Activated CD4-positive, alpha-beta T cell treated with anti-CD3 and anti-CD28 coated beads for 36 hours (primary cell): ENCODE measurements at regions of chr11 and their contacts with region 1.

Region 1: DNA sequence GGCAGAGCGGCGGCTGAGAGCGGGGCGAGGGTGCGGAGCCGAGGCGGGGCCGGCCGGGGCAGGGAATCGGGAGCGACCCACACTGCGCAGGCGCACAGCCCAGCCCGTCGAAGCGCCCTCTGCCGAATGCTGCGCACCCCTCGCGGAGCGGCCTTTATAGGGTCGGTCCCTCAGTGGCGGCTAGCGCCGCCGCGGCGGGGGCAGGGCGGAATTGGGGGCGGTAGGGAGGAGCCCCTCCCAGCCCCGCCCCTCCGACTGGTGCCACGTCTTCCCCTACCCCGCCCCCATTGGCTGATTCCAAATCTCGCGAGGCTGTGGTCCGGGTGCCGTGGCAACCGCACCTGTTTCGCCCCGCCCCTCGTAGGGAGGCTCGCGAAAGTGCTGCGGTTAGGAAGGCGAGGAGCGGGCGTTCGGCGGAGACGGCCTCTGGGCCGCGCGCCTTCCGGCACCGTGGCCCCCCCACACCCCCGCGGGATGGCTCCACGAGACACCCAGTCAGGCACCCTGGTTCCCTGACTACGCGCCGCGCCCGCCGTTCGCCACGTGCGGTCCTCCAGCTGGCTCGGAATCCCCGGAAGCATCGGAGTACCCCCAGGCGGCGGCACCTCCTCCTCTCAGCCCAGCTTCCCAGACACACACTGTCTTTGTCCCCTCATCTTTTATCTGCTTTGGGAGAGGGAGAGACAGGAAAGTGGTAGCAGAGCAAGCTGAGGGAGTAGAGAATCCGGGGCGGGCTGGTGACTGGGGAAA is at the start of gene EHD1:
- DNase-seq: peak; percentile 100
- ATAC-seq: peak; percentile 85
- H3K4me3 Mint-ChIP-seq: peak within 1 kb of the TSS; percentile 92
- H3K27ac Mint-ChIP-seq: peak within 1 kb of the TSS; percentile 97
- H3K4me1 Mint-ChIP-seq: peaks cover 60% of the 10 kb centered on the region
- H3K27me3 Mint-ChIP-seq: no peaks in the 10 kb centered on the region
- total RNA-seq, gene EHD1: 71.0 to 73.6 TPM

Region 2: DNA sequence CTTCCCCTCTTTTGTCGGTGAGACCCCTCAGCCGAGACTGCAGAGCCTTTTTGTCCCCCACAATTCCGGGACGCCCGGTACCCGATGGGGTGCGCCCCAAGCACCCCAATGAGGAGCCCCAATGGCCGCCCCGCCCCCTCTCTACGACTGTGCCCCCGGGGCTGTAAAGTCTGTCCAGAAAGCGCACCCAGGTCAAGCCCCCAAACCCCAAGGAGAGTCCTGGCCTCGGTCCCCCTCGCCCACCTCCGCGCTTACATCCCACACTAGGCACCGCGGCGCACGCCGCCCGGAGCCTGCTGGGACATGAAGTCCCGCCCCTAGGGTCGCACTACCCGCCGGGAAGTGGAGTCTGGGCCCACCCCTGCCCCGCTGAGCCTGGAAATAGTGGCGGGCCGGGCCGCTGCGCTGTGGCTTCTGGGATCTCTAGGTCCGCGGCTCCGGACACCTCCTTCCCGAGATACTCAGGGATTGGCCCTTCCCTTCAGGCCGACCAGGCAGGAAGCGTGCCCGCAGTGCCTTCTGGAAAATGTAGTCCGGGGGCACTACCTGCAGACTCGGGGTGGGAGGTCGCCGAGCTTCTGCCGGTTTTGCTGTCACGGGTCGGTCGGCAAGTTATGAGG is 68.3 kb before region 1 on chr11 and contains the start of gene MEN1:
- CTCF ChIA-PET with region 1: no interaction called
- POLR2A ChIA-PET with region 1: no interaction called
- intact Hi-C with region 1: loop called in 1 of 2 experiments (anchors 1 kb)
- DNase-seq: peak; percentile 92
- ATAC-seq: peak; percentile 95
- H3K4me3 Mint-ChIP-seq: peak within 1 kb of the TSS; percentile 93
- H3K27ac Mint-ChIP-seq: peak within 1 kb of the TSS; percentile 85
- H3K4me1 Mint-ChIP-seq: peaks cover 21% of the 10 kb centered on the region
- H3K27me3 Mint-ChIP-seq: no peaks in the 10 kb centered on the region
- total RNA-seq, gene MEN1: 34.8 to 38.5 TPM

Region 3: GRCh38 chr11:64864473-64865285 is 14.0 kb before region 1 on chr11:
- CTCF ChIA-PET with region 1: interaction called, 139 read pairs
- POLR2A ChIA-PET with region 1: interaction called, 128 read pairs
- intact Hi-C with region 1: loop called (anchors 1 kb)
- DNase-seq: peak; percentile 81
- ATAC-seq: peak; percentile 46
- H3K4me3 Mint-ChIP-seq: peak overlapping the region; percentile 64
- H3K27ac Mint-ChIP-seq: peak overlapping the region; percentile 95
- H3K4me1 Mint-ChIP-seq: peaks cover 95% of the 10 kb centered on the region
- H3K27me3 Mint-ChIP-seq: no peaks in the 10 kb centered on the region

Region 4: GRCh38 chr11:64906314-64906635 is 27.6 kb after region 1 on chr11:
- CTCF ChIA-PET with region 1: no interaction called
- POLR2A ChIA-PET with region 1: no interaction called
- intact Hi-C with region 1: no loop called
- DNase-seq: no peak
- ATAC-seq: no peak
- H3K4me3 Mint-ChIP-seq: no peak overlapping the region
- H3K27ac Mint-ChIP-seq: no peak overlapping the region
- H3K4me1 Mint-ChIP-seq: peaks cover 6% of the 10 kb centered on the region
- H3K27me3 Mint-ChIP-seq: no peaks in the 10 kb centered on the region

Region 5: DNA sequence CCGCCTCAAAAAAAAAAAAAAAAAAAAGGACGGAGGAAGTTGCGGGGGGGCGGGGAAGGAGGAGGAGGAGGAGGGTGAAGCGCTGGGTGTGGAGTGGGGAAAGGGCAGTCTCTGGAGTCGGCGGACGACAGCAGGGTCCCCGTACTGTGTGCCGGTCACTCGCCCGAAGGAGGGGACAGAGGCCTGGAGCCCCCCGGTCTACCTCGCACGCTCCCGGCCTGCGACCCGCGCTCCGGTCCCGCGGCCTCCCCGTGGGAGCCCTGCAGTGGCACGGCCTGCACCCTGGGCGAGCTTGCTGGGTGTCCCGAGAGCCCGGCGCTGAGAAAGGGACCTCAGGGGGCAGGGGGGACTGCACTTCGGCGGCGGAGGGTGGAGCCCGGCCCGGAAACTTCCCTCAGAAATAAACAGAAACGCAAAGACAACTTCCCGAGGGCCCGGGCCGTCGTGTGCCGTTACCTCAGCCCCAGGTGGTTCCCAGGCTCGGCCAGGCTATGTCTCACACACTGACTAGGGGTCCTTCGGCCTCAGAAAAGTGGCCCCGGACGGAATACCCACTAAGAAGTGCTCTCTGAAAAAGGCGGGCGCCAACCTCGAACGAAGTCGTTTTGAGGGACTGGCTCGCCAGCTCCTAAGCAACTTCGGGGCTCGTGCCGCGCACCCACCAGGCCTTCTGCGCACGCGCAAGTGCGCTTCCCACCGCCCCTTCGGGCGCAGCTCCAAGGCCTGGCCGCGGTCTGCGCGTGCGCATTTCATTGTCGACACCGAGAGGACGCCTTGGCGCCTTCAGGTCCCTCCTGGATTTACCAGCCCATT is 93.0 kb after region 1 on chr11 and contains the start of gene MAJIN:
- CTCF ChIA-PET with region 1: no interaction called
- POLR2A ChIA-PET with region 1: no interaction called
- intact Hi-C with region 1: loop called in 1 of 2 experiments (anchors 1 kb)
- DNase-seq: peak; percentile 96
- ATAC-seq: peak; percentile 48
- H3K4me3 Mint-ChIP-seq: peak within 1 kb of the TSS; percentile 63
- H3K27ac Mint-ChIP-seq: peak within 1 kb of the TSS; percentile 94
- H3K4me1 Mint-ChIP-seq: peaks cover 42% of the 10 kb centered on the region
- H3K27me3 Mint-ChIP-seq: no peaks in the 10 kb centered on the region
- total RNA-seq, gene MAJIN: 1.2 to 1.6 TPM

Region 6: DNA sequence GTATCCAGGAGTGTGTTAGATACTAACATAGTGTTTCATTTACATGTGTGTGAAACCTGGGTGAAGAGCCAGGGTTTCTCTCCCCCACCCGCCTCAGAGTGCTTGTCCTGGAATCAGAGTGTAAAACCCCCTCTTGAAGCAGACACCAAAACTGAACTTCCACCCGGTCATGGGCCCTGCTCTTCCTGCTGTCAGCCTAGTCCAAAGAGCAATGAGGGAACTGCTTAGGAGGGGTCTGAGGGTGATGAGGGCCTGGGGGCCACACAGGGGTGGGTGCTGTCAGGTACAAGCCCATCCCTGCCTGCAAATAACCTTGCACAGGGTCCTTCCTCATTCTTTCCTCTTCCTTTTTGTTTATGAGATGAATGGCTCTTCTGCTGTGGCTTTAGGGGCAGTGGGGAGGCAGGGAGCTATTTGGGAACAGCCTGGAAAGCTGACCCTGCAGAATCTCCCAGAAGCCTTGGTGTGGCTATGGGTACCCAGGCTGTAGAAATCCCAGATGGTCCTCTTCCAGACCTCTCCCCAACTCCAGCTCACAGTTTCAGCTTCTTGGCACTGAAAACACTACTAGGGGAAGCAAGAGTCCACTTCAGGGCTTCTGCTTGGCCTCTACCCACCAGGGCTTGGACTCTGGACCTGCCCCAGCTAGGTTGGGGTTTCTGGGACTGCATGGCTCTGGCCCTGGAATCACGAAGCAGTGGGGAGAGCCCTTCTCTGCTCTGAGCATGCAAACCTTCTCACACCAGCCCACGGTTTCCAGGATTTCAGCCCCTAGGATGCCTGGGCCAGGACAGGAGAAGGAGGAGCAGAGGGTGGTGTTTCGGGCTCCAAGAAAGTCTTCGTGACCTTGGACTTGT is 109.6 kb after region 1 on chr11:
- CTCF ChIA-PET with region 1: no interaction called
- POLR2A ChIA-PET with region 1: no interaction called
- intact Hi-C with region 1: no loop called
- DNase-seq: no peak
- ATAC-seq: no peak
- H3K4me3 Mint-ChIP-seq: no peak overlapping the region
- H3K27ac Mint-ChIP-seq: no peak overlapping the region
- H3K4me1 Mint-ChIP-seq: peaks cover 13% of the 10 kb centered on the region
- H3K27me3 Mint-ChIP-seq: peaks cover 2% of the 10 kb centered on the region

Region 7: GRCh38 chr11:65083834-65084597 is 205.3 kb after region 1 on chr11 and contains the starts of genes CDCA5 and ZFPL1:
- CTCF ChIA-PET with region 1: no interaction called
- POLR2A ChIA-PET with region 1: no interaction called
- intact Hi-C with region 1: loop called in 1 of 2 experiments (anchors 1 kb)
- DNase-seq: peak; percentile 97
- ATAC-seq: peak; percentile 81
- H3K4me3 Mint-ChIP-seq: peak within 1 kb of the TSS; percentile 99
- H3K27ac Mint-ChIP-seq: peak within 1 kb of the TSS; percentile 98
- H3K4me1 Mint-ChIP-seq: peaks cover 41% of the 10 kb centered on the region
- H3K27me3 Mint-ChIP-seq: no peaks in the 10 kb centered on the region
- total RNA-seq, gene CDCA5: 111 to 119 TPM
- total RNA-seq, gene ZFPL1: 24.2 to 31.8 TPM

Region 8: DNA sequence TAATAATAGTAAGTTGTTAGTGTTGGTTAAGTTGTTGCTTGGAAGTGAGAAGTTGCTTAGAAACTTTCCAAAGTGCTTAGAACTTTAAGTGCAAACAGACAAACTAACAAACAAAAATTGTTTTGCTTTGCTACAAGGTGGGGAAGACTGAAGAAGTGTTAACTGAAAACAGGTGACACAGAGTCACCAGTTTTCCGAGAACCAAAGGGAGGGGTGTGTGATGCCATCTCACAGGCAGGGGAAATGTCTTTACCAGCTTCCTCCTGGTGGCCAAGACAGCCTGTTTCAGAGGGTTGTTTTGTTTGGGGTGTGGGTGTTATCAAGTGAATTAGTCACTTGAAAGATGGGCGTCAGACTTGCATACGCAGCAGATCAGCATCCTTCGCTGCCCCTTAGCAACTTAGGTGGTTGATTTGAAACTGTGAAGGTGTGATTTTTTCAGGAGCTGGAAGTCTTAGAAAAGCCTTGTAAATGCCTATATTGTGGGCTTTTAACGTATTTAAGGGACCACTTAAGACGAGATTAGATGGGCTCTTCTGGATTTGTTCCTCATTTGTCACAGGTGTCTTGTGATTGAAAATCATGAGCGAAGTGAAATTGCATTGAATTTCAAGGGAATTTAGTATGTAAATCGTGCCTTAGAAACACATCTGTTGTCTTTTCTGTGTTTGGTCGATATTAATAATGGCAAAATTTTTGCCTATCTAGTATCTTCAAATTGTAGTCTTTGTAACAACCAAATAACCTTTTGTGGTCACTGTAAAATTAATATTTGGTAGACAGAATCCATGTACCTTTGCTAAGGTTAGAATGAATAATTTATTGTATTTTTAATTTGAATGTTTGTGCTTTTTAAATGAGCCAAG is 546.7 kb after region 1 on chr11:
- CTCF ChIA-PET with region 1: no interaction called
- POLR2A ChIA-PET with region 1: interaction called, 8 read pairs
- intact Hi-C with region 1: loop called in 1 of 2 experiments (anchors 5 kb)
- DNase-seq: peak; percentile 87
- ATAC-seq: peak; percentile 18
- H3K4me3 Mint-ChIP-seq: peak overlapping the region; percentile 100
- H3K27ac Mint-ChIP-seq: peak overlapping the region; percentile 99
- H3K4me1 Mint-ChIP-seq: peaks cover 51% of the 10 kb centered on the region
- H3K27me3 Mint-ChIP-seq: peaks cover 6% of the 10 kb centered on the region